CD4-positive, alpha-beta memory T cell (primary cell): ENCODE measurements at regions of chr5 and their contacts with region 1.

Region 1: GRCh38 chr5:60677844-60678664 is 21.9 kb downstream of the DEPDC1B start:
- DNase-seq: peak in 4 of 5 donors; percentile 26 to 33 (median 28)
- H3K4me3 ChIP-seq: no peak overlapping the region
- H3K4me3 Mint-ChIP-seq: peak overlapping the region in 3 of 8 donors; percentile 5 to 46 (median 44)
- H3K27ac ChIP-seq: no peak overlapping the region
- H3K27ac Mint-ChIP-seq: no peak overlapping the region
- H3K4me1 ChIP-seq: peaks cover 7% of the 10 kb centered on the region
- H3K4me1 Mint-ChIP-seq: peaks cover 0 to 4% (median 1%) of the 10 kb centered on the region in 4 donors
- H3K27me3 ChIP-seq: no peaks in the 10 kb centered on the region
- H3K27me3 Mint-ChIP-seq: peaks cover 0 to 1% of the 10 kb centered on the region in 2 donors

Region 2: DNA sequence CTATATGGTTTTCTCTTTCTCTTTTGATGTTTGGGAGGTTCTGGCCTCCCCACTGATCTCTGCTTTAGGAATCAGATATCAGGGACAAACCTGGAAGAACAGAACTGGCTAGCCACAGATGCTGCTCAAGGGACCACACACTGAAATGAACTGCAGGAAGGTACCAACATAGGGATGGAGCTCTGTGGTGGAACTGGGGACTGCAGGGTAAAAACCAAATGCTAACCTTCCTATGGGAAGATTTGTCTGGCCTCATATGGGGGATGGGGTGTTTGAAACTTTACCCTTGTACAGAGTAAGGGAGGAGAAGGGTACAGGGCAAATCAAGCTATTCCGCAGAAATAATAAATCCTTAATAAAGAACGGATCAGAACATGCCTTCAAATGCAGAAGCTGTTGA is 116.6 kb after region 1 on chr5:
- CTCF ChIA-PET with region 1: no interaction called
- POLR2A ChIA-PET with region 1: no interaction called
- intact Hi-C with region 1: no loop called
- DNase-seq: no peak
- H3K4me3 ChIP-seq: no peak overlapping the region
- H3K4me3 Mint-ChIP-seq: no peak overlapping the region
- H3K27ac ChIP-seq: no peak overlapping the region
- H3K27ac Mint-ChIP-seq: no peak overlapping the region
- H3K4me1 ChIP-seq: no peaks in the 10 kb centered on the region
- H3K4me1 Mint-ChIP-seq: no peaks in the 10 kb centered on the region
- H3K27me3 ChIP-seq: no peaks in the 10 kb centered on the region
- H3K27me3 Mint-ChIP-seq: peaks cover 4 to 8% of the 10 kb centered on the region in 2 donors

Region 3: DNA sequence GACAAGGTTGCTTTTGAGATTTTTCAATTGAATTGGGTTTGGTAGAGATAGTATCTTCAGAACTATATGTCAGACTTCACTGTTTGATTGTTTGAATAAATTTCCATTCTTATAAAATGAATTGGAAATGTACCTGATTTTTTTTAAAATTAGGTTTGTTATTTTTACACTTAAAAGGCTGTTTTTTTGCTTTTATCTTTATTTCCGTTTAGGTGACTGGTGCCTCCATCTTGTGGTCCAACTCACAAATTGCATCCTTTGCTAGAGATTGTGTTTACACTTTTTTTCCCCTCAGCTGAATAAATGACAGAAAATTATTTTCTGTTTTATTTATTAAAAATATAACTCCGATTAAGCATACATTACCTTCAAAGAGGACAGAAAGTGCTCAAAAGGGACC is 282.5 kb after region 1 on chr5:
- CTCF ChIA-PET with region 1: interaction called, 5 read pairs
- POLR2A ChIA-PET with region 1: no interaction called
- intact Hi-C with region 1: loop called (anchors 2 kb)
- DNase-seq: peak in 4 of 5 donors; percentile 8 to 24 (median 20)
- H3K4me3 ChIP-seq: no peak overlapping the region
- H3K4me3 Mint-ChIP-seq: no peak overlapping the region
- H3K27ac ChIP-seq: no peak overlapping the region
- H3K27ac Mint-ChIP-seq: no peak overlapping the region
- H3K4me1 ChIP-seq: peaks cover 8% of the 10 kb centered on the region
- H3K4me1 Mint-ChIP-seq: peaks cover 5 to 13% (median 9%) of the 10 kb centered on the region in 4 donors
- H3K27me3 ChIP-seq: no peaks in the 10 kb centered on the region
- H3K27me3 Mint-ChIP-seq: no peaks in the 10 kb centered on the region

Region 4: DNA sequence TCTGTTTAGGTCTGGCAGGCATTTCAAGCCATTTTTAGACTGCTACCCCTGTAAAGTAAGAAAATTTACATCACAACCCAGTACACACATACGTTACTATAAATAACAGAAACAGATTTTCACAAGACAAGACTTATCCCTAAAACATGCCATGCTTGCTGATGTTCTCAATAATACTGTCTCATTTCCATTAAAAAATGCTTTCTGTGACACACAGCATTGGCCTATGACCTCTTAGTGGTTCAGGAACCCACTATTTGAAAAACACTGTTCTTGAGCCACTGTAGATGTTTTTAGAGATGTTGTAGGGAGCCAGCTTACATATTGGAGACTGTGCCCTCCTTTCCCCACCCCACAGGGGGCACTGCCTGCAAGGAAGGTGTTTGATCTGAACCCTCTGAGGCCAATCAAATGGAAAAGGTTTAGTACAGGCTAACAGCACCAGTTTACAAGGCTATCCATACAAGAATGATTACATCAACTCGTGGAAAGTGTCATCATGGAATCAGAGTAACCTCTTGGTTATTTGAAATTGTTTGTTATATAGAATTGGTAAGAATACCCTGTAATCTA is 684.8 kb after region 1 on chr5:
- CTCF ChIA-PET with region 1: no interaction called
- POLR2A ChIA-PET with region 1: no interaction called
- intact Hi-C with region 1: no loop called
- DNase-seq: peak in 1 of 5 donors; percentile 30
- H3K4me3 ChIP-seq: no peak overlapping the region
- H3K4me3 Mint-ChIP-seq: no peak overlapping the region
- H3K27ac ChIP-seq: no peak overlapping the region
- H3K27ac Mint-ChIP-seq: no peak overlapping the region
- H3K4me1 ChIP-seq: no peaks in the 10 kb centered on the region
- H3K4me1 Mint-ChIP-seq: peaks cover 7 to 22% (median 20%) of the 10 kb centered on the region in 4 donors
- H3K27me3 ChIP-seq: no peaks in the 10 kb centered on the region
- H3K27me3 Mint-ChIP-seq: no peaks in the 10 kb centered on the region